Caco-2 (cell line): ENCODE measurements at regions of chr10 and their contacts with region 1.

Region 1: DNA sequence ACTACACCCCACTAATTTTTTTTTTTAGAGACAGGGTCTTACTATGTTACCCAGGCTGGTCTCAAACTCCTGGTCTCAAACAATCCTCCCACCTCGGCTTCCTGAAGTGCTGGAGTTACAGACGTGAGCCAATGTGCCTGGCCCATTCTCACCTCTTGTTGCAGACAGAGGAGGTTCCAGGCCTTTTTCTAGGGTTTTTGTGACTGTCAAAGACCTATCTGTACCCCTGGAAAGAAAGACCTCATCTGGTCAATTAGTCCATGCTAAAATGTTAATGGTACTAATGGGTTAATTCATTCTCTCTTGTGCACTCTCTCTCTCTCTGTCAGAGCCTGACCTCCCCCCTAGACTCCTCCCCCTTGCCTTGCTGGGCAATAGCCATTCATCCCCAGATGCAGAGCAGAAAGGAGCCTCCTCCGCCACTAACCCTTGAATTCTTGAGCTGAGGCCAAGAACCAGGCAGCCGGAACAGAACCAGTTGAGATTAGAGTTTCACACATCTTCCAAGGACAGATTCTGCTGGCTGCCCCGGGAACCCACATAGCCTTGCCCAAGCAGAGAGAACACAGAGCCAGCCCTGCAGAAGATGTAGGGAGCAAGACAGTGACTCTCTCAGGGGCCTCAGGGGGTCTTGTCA is 209.7 kb downstream of the SKIDA1 start:
- DNase-seq: peak; percentile 73 to 81
- H3K4me3 ChIP-seq: no peak overlapping the region
- H3K4me3 Mint-ChIP-seq: peak overlapping the region; percentile 28
- H3K27ac Mint-ChIP-seq: peak overlapping the region; percentile 75
- H3K4me1 ChIP-seq: peaks cover 31% of the 10 kb centered on the region
- H3K4me1 Mint-ChIP-seq: peaks cover 40% of the 10 kb centered on the region
- H3K27me3 ChIP-seq: no peaks in the 10 kb centered on the region
- H3K27me3 Mint-ChIP-seq: no peaks in the 10 kb centered on the region
- CTCF ChIP-seq: no peak

Region 2: GRCh38 chr10:21329995-21330627 is 14.3 kb after region 1 on chr10:
- CTCF ChIA-PET with region 1: interaction called, 8 read pairs
- POLR2A ChIA-PET with region 1: no interaction called
- intact Hi-C with region 1: loop called (anchors 2 kb)
- DNase-seq: peak in 1 of 2 experiments; percentile 57
- H3K4me3 ChIP-seq: no peak overlapping the region
- H3K4me3 Mint-ChIP-seq: no peak overlapping the region
- H3K27ac Mint-ChIP-seq: no peak overlapping the region
- H3K4me1 ChIP-seq: peaks cover 33% of the 10 kb centered on the region
- H3K4me1 Mint-ChIP-seq: peaks cover 23% of the 10 kb centered on the region
- H3K27me3 ChIP-seq: no peaks in the 10 kb centered on the region
- H3K27me3 Mint-ChIP-seq: no peaks in the 10 kb centered on the region
- CTCF ChIP-seq: no peak